ENCODE measurements at regions of chr10 and their contacts with region 1.

Region 1: DNA sequence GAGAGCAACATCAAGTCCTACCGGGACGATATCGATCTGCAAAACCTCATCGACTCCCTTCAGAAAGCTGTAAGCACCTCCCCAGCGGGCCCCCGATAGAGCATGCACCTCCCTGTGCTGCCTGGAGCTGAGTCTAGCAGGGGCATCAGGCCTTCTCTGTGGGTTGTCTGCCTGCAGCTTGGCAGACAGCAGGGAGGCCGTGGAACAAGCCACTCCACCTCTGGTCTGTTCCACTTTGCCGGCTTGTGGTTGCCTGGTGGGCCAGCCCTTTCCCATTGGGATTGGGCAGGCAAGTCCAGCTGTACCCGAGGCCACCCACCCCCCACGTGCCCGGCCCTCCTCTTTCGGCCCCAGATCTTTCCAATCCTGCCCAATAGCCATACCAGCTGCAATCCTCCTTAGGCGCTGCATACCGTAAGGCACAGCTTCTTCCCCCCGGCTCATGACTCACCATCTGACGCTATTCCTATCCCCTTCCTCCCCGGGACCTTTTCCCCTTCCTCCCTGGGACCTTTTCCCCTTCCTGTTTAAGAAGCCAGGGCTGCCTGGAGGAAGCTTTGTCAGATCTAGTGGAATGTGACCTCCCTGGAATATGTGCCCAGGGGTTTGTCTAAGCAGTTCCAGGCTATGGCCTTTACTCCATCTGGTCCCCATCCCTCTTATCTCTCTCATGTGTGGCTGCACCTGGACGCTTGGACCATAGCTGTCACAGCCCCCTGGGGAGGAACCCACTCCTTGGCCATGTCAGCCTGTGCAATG is 28.1 kb upstream of the SH2D4B start:
- DNase-seq: no peak
- ATAC-seq: no peak
- H3K4me3 ChIP-seq: no peak overlapping the region
- H3K4me3 Mint-ChIP-seq: no peak overlapping the region
- H3K27ac ChIP-seq: no peak overlapping the region
- H3K27ac Mint-ChIP-seq: peak overlapping the region; percentile 79
- H3K4me1 ChIP-seq: peaks cover 32% of the 10 kb centered on the region
- H3K4me1 Mint-ChIP-seq: peaks cover 42% of the 10 kb centered on the region
- H3K27me3 ChIP-seq: no peaks in the 10 kb centered on the region
- H3K27me3 Mint-ChIP-seq: no peaks in the 10 kb centered on the region
- CTCF ChIP-seq: no peak

Region 2: DNA sequence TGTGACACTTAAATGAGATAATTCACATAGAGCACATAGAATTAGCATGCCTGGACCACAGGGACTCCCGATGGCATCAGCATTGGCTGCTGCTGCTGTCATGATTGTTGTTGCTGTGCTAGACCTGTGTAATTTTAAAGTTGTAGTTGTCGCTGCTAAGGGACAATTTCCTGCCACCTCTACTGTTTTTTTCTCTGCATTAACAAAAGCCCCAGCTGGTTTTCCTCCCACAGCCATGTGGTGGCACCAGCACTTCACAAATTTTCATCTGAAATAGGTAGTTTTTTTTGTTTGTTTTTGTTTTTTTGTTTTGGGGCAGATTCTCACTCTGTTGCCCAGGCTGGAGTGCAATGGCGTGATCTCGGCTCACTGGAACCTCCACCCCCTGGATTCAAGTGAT is 126.6 kb before region 1 on chr10:
- CTCF ChIA-PET with region 1: interaction called, 63 read pairs
- POLR2A ChIA-PET with region 1: no interaction called
- intact Hi-C with region 1: loop called (anchors 1 kb)
- DNase-seq: peak; percentile 11 to 77 (median 48)
- ATAC-seq: peak; percentile 77
- H3K4me3 ChIP-seq: no peak overlapping the region
- H3K4me3 Mint-ChIP-seq: no peak overlapping the region
- H3K27ac ChIP-seq: no peak overlapping the region
- H3K27ac Mint-ChIP-seq: peak overlapping the region; percentile 73
- H3K4me1 ChIP-seq: peaks cover 4% of the 10 kb centered on the region
- H3K4me1 Mint-ChIP-seq: peaks cover 15% of the 10 kb centered on the region
- H3K27me3 ChIP-seq: no peaks in the 10 kb centered on the region
- H3K27me3 Mint-ChIP-seq: no peaks in the 10 kb centered on the region
- CTCF ChIP-seq: peak; percentile 83

Region 3: DNA sequence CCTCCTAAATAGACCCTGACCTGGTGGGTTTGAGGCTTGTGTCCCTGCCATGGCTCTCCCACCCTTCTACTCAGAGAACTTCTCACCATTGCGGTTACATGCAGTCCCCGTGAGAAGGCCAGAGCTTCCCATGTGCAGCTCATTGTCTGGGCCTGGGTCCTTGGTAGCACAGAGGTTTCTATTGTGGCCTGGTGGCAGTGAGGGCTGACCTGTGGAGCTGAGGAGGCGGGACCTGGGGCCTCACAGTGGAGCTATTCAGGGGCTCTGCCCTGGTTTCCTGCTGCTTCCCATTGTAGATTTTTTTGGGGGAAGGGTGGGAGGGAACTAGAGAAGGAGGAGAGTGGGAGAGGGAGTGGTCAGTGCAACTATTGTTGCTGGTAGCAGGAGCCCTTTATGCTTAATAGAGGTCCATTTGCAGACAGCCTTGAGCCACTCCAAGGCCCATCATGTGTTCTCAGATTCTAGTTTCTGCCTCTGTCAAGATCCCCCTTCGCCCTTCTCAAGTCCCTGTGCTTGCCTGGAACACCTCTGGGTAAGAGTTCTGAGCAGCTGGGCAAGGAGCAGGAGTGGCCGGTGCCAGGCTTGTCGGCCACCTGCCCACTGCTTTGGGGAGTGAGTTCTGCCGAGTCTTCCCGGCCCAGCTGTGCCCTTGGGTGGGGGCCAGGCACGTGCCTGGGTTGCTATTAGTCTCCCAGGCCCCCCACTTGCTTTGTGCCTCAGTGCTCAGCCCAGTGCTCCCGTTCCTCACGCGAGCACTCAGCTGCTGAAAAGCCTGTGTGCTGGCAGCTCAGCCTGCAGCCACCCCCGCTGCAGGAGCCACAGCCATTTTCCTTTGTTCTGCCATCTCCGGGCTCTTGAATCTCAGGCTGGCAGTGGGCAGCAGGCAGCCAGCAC is 44.8 kb before region 1 on chr10:
- CTCF ChIA-PET with region 1: interaction called, 404 read pairs
- POLR2A ChIA-PET with region 1: interaction called, 30 read pairs
- intact Hi-C with region 1: loop called in 1 of 2 experiments (anchors 1 kb)
- DNase-seq: peak in 3 of 9 experiments; percentile 32 to 60 (median 41)
- ATAC-seq: peak; percentile 2
- H3K4me3 ChIP-seq: peak overlapping the region; percentile 25 to 30
- H3K4me3 Mint-ChIP-seq: peak overlapping the region; percentile 77
- H3K27ac ChIP-seq: peak overlapping the region; percentile 49 to 81
- H3K27ac Mint-ChIP-seq: peak overlapping the region; percentile 98
- H3K4me1 ChIP-seq: peaks cover 94% of the 10 kb centered on the region
- H3K4me1 Mint-ChIP-seq: peaks cover 96% of the 10 kb centered on the region
- H3K27me3 ChIP-seq: no peaks in the 10 kb centered on the region
- H3K27me3 Mint-ChIP-seq: no peaks in the 10 kb centered on the region
- CTCF ChIP-seq: no peak

Region 4: GRCh38 chr10:80498833-80499741 is 10.5 kb before region 1 on chr10:
- CTCF ChIA-PET with region 1: interaction called, 137 read pairs
- POLR2A ChIA-PET with region 1: interaction called, 107 read pairs
- intact Hi-C with region 1: no loop called
- DNase-seq: peak in 7 of 9 experiments; percentile 27 to 66 (median 55)
- ATAC-seq: peak; percentile 39
- H3K4me3 ChIP-seq: peak overlapping the region; percentile 12 to 29
- H3K4me3 Mint-ChIP-seq: peak overlapping the region; percentile 74
- H3K27ac ChIP-seq: peak overlapping the region; percentile 11 to 84
- H3K27ac Mint-ChIP-seq: peak overlapping the region; percentile 96
- H3K4me1 ChIP-seq: peaks cover 98% of the 10 kb centered on the region
- H3K4me1 Mint-ChIP-seq: peaks cover 97% of the 10 kb centered on the region
- H3K27me3 ChIP-seq: no peaks in the 10 kb centered on the region
- H3K27me3 Mint-ChIP-seq: no peaks in the 10 kb centered on the region
- CTCF ChIP-seq: no peak

Region 5: GRCh38 chr10:80580638-80581468 is 71.3 kb after region 1 on chr10:
- CTCF ChIA-PET with region 1: interaction called, 19 read pairs
- POLR2A ChIA-PET with region 1: no interaction called
- intact Hi-C with region 1: loop called in 1 of 2 experiments (anchors 2 kb)
- DNase-seq: no peak
- ATAC-seq: no peak
- H3K4me3 ChIP-seq: no peak overlapping the region
- H3K4me3 Mint-ChIP-seq: no peak overlapping the region
- H3K27ac ChIP-seq: no peak overlapping the region
- H3K27ac Mint-ChIP-seq: no peak overlapping the region
- H3K4me1 ChIP-seq: no peaks in the 10 kb centered on the region
- H3K4me1 Mint-ChIP-seq: no peaks in the 10 kb centered on the region
- H3K27me3 ChIP-seq: no peaks in the 10 kb centered on the region
- H3K27me3 Mint-ChIP-seq: peaks cover 9% of the 10 kb centered on the region
- CTCF ChIP-seq: no peak

Region 6: GRCh38 chr10:80805343-80806020 is 295.9 kb after region 1 on chr10:
- CTCF ChIA-PET with region 1: no interaction called
- POLR2A ChIA-PET with region 1: no interaction called
- intact Hi-C with region 1: no loop called
- DNase-seq: no peak
- ATAC-seq: no peak
- H3K4me3 ChIP-seq: no peak overlapping the region
- H3K4me3 Mint-ChIP-seq: no peak overlapping the region
- H3K27ac ChIP-seq: no peak overlapping the region
- H3K27ac Mint-ChIP-seq: no peak overlapping the region
- H3K4me1 ChIP-seq: no peaks in the 10 kb centered on the region
- H3K4me1 Mint-ChIP-seq: no peaks in the 10 kb centered on the region
- H3K27me3 ChIP-seq: no peaks in the 10 kb centered on the region
- H3K27me3 Mint-ChIP-seq: peaks cover 2% of the 10 kb centered on the region
- CTCF ChIP-seq: no peak

Measured in CD8-positive, alpha-beta T cell (primary cell).